ENCODE measurements at regions of chr4 and their contacts with region 1.

Region 1: DNA sequence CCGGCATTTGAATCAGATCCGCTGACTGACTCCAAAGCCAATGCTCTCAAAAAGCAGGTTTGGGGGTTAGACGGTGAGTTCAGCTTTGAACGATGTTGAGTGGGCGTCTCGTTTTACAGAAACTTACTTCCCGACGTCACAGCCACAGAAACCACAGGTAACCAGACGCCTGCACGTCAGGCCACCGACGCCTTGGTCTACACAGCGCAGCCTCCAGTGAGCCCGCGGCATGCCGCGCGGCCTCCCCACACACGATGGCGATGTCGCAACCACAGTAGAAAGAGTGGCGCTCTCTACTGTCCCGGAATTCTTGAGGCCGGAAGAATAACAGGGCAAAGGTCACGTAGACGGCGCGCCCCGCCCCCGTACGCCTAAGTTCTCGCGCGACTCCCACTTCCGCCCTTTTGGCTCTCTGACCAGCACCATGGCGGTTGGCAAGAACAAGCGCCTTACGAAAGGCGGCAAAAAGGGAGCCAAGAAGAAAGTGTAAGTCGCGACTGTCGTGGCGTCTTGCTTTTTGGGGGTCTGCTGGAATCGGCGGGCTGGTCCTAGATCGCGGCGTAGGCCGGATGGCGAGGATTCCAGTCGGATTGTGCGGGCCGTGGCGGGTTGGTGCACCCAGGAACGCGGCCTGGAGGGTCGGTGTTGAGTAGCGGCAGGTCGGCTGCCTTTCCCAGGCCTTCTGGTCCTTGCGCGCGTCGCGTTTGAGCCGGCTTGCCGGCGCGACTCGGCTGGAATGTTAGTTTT is at the start of gene RPS3A:
- DNase-seq: peak; percentile 99
- H3K4me3 Mint-ChIP-seq: peak within 1 kb of the TSS; percentile 93
- H3K27ac Mint-ChIP-seq: peak within 1 kb of the TSS; percentile 100
- H3K4me1 Mint-ChIP-seq: peaks cover 49% of the 10 kb centered on the region
- H3K27me3 Mint-ChIP-seq: no peaks in the 10 kb centered on the region
- total RNA-seq, gene RPS3A: 3,192 to 3,296 TPM

Region 2: DNA sequence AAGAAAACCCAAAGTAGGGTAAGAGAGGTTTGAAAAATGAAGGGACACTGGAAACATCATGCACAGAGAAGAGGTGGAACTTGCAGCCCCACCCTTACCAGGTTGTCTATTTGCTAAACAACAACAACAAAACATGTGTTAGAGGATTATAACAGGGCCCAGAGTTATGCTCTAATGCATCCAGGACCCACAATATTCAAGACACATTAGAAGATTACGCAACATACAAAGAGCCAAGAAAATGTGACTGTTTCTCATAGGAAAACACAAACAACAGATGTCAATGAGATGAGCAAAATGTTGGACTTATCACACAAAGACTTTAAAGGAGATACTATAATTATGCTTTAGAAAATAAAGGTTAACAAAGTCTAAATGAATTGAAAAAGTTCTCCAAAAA is 212.8 kb before region 1 on chr4:
- CTCF ChIA-PET with region 1: no interaction called
- POLR2A ChIA-PET with region 1: no interaction called
- intact Hi-C with region 1: loop called (anchors 2 kb)
- DNase-seq: no peak
- H3K4me3 Mint-ChIP-seq: no peak overlapping the region
- H3K27ac Mint-ChIP-seq: no peak overlapping the region
- H3K4me1 Mint-ChIP-seq: peaks cover 18% of the 10 kb centered on the region
- H3K27me3 Mint-ChIP-seq: no peaks in the 10 kb centered on the region

Region 3: DNA sequence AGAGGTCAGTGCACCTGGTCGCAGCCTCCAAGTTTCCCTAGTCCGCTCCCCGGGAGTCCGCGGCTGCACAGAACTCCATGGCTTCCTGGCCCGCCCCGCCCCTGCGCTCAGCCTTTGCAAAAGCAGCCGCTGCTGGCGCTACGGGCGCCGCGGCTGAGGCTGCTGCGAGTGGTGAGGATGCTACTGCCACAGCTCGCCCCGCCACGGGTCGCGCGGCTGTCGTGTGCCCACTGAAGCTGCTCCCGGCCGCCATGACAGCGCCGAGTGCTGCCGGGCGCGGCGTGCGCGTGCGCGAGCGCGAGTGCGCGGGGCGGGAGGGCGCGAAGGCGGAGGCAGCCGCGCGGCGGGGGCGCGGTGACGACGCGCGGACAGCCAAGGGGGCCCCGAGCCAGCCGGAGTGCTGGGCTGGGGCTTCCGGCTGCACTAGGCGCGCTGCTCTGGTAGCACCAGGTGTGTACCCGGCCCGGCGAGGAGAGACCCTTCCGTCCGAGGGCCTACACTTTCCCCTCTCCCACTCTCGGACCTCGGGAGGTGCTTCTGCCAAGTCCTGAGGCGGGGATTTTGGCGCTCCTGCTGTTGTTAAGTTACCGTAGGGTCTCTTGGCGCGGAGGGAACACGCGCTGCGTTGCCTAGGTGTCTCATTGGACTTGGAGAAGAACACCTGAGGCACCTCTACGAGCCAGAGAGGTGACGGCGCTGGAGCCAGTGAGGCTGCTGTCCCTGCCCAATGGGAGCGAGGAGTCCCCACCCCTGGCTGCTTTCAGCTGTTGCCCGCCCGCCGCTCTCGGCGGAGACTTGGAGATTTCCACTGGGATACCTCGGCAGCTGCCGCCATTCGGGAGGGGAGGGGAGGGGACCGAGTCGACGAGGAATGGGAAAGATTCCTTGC is 83.7 kb before region 1 on chr4:
- CTCF ChIA-PET with region 1: interaction called, 6 read pairs
- POLR2A ChIA-PET with region 1: interaction called, 9 read pairs
- intact Hi-C with region 1: loop called (anchors 1 kb)
- DNase-seq: peak; percentile 87
- H3K4me3 Mint-ChIP-seq: peak overlapping the region; percentile 100
- H3K27ac Mint-ChIP-seq: peak overlapping the region; percentile 95
- H3K4me1 Mint-ChIP-seq: peaks cover 23% of the 10 kb centered on the region
- H3K27me3 Mint-ChIP-seq: no peaks in the 10 kb centered on the region

Region 4: GRCh38 chr4:151408630-151409469 is 309.4 kb after region 1 on chr4 and contains the start of gene FHIP1A:
- CTCF ChIA-PET with region 1: no interaction called
- POLR2A ChIA-PET with region 1: no interaction called
- intact Hi-C with region 1: loop called (anchors 1 kb)
- DNase-seq: peak; percentile 88
- H3K4me3 Mint-ChIP-seq: peak within 1 kb of the TSS; percentile 86
- H3K27ac Mint-ChIP-seq: peak within 1 kb of the TSS; percentile 65
- H3K4me1 Mint-ChIP-seq: peaks cover 22% of the 10 kb centered on the region
- H3K27me3 Mint-ChIP-seq: peaks cover 15% of the 10 kb centered on the region
- total RNA-seq, gene FHIP1A: 0.45 to 0.46 TPM